Activated CD4-positive, alpha-beta T cell treated with anti-CD3 and anti-CD28 coated beads for 36 hours (primary cell): ENCODE measurements at regions of chr6 and their contacts with region 1.

Region 1: DNA sequence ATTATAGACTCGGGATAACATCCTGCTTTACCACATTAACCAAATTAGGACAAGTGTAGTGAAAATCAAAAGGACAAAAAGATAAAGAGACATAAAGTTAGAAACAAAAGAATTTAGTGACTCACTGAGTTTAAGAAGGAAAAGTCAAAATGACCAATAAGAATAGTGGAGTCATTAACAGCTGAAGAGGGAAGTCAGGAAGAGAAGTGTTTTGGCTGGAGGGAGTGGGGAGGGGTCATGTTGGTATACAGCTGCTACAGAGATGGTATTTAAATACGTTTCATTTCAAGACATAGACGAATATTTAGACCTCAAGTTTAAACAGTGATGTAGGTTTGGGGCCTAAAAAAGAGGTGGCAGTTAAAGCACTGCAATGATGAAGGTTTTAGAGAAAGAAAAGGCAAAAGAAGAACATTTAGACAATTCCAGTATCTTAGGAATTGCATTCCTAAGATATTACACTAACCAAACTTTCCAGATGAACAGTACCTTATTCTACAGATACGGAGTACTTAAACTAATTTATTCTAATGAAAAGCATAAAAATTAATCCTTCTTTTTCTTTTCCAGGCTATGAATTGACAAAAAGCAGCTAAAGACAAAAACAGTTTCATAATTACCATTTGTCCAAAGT is 10.6 kb downstream of the FKBP5 start:
- DNase-seq: no peak
- ATAC-seq: no peak
- H3K4me3 Mint-ChIP-seq: peak overlapping the region; percentile 9
- H3K27ac Mint-ChIP-seq: peak overlapping the region; percentile 78
- H3K4me1 Mint-ChIP-seq: peaks cover 83% of the 10 kb centered on the region
- H3K27me3 Mint-ChIP-seq: no peaks in the 10 kb centered on the region

Region 2: GRCh38 chr6:34521463-34522285 is 1156.5 kb before region 1 on chr6:
- CTCF ChIA-PET with region 1: no interaction called
- POLR2A ChIA-PET with region 1: no interaction called
- intact Hi-C with region 1: no loop called
- DNase-seq: peak; percentile 4
- ATAC-seq: no peak
- H3K4me3 Mint-ChIP-seq: no peak overlapping the region
- H3K27ac Mint-ChIP-seq: no peak overlapping the region
- H3K4me1 Mint-ChIP-seq: no peaks in the 10 kb centered on the region
- H3K27me3 Mint-ChIP-seq: no peaks in the 10 kb centered on the region

Region 3: GRCh38 chr6:35663447-35664235 is 14.5 kb before region 1 on chr6:
- CTCF ChIA-PET with region 1: interaction called, 35 read pairs
- POLR2A ChIA-PET with region 1: interaction called, 3 read pairs
- intact Hi-C with region 1: loop called (anchors 2 kb)
- DNase-seq: no peak
- ATAC-seq: peak; percentile 71
- H3K4me3 Mint-ChIP-seq: no peak overlapping the region
- H3K27ac Mint-ChIP-seq: no peak overlapping the region
- H3K4me1 Mint-ChIP-seq: peaks cover 27% of the 10 kb centered on the region
- H3K27me3 Mint-ChIP-seq: no peaks in the 10 kb centered on the region

Region 4: DNA sequence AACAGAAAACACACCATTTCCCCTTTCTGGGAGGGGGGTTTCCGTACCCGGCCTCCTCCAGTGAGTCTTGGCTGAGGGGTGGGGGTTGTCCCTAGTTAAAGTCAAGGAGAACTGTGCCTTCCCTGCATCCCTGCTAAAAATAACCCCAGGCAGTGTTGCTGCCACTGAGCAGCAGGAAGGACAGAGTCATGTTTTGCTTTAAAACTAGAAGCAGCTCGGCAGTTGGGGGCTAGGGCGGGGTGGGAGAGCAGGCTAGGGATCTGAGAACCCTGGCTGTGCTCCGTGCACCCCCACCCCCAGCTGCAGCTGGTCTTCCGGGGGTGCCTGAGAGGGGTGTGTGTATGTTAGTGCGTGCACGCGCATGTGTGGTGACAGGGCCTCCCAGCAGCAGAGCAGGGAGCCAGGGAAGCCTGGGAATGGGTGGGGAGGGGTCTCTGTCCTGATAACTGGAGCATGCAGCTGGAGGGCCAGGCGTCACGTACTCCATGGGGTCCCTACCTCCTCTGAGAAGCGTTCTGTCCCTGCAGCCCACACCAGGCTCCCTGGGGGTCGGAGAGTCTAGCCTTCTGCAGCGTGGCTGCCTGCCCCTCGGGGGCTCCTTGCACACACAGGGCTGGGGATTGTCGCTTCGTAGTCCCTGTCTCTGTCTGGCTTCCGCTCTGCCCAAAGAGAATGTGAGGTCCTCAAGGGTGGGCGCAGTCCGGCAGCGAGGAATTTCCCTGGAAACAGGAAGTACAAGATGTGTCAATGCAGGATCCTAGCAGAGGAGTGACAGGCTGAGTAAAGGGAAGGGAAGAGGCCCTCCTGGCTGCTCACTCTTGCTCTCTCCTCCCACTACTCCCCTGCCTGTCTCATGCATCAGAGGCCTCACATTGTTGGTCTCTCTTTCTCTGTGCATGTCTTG is 41.9 kb after region 1 on chr6:
- CTCF ChIA-PET with region 1: interaction called, 7 read pairs
- POLR2A ChIA-PET with region 1: no interaction called
- intact Hi-C with region 1: loop called (anchors 1 to 2 kb)
- DNase-seq: peak; percentile 73
- ATAC-seq: peak; percentile 54
- H3K4me3 Mint-ChIP-seq: peak overlapping the region; percentile 75
- H3K27ac Mint-ChIP-seq: peak overlapping the region; percentile 90
- H3K4me1 Mint-ChIP-seq: peaks cover 81% of the 10 kb centered on the region
- H3K27me3 Mint-ChIP-seq: no peaks in the 10 kb centered on the region

Region 5: GRCh38 chr6:35905841-35906498 is 227.8 kb after region 1 on chr6:
- CTCF ChIA-PET with region 1: no interaction called
- POLR2A ChIA-PET with region 1: no interaction called
- intact Hi-C with region 1: no loop called
- DNase-seq: no peak
- ATAC-seq: peak; percentile 23
- H3K4me3 Mint-ChIP-seq: no peak overlapping the region
- H3K27ac Mint-ChIP-seq: no peak overlapping the region
- H3K4me1 Mint-ChIP-seq: peaks cover 12% of the 10 kb centered on the region
- H3K27me3 Mint-ChIP-seq: no peaks in the 10 kb centered on the region

Region 6: DNA sequence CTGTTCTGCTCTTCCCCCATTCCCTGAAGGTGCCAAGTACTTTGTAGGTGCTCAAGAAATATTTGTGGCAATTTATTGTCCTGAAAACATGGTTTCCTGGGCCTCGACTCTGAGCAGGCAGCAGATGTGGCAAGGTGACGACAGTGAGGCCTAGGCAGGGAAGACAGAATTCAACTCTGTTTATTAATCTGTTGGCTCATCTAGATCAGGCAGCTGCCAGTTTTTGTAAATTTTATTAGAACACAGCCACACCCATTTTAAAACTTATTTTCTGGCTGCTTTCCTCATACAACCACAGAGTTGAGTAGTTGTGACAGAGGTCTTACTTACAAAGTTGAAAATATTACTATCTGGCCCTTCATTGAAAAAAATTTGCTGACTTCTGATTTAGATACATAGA is 374.0 kb after region 1 on chr6:
- CTCF ChIA-PET with region 1: no interaction called
- POLR2A ChIA-PET with region 1: no interaction called
- intact Hi-C with region 1: no loop called
- DNase-seq: no peak
- ATAC-seq: no peak
- H3K4me3 Mint-ChIP-seq: no peak overlapping the region
- H3K27ac Mint-ChIP-seq: no peak overlapping the region
- H3K4me1 Mint-ChIP-seq: peaks cover 16% of the 10 kb centered on the region
- H3K27me3 Mint-ChIP-seq: no peaks in the 10 kb centered on the region

Region 7: GRCh38 chr6:36724514-36725390 is 1046.6 kb after region 1 on chr6:
- CTCF ChIA-PET with region 1: no interaction called
- POLR2A ChIA-PET with region 1: no interaction called
- intact Hi-C with region 1: no loop called
- DNase-seq: peak; percentile 82
- ATAC-seq: peak; percentile 45
- H3K4me3 Mint-ChIP-seq: no peak overlapping the region
- H3K27ac Mint-ChIP-seq: no peak overlapping the region
- H3K4me1 Mint-ChIP-seq: peaks cover 25% of the 10 kb centered on the region
- H3K27me3 Mint-ChIP-seq: no peaks in the 10 kb centered on the region